Astrocyte of the cerebellum (primary cell): ENCODE measurements at regions of chr5 and their contacts with region 1.

Region 1: GRCh38 chr5:156815988-156816599 is 34.0 kb upstream of the PPP1R2B start:
- DNase-seq: peak; percentile 6
- H3K4me3 ChIP-seq: no peak overlapping the region
- CTCF ChIP-seq: peak; percentile 56

Region 2: DNA sequence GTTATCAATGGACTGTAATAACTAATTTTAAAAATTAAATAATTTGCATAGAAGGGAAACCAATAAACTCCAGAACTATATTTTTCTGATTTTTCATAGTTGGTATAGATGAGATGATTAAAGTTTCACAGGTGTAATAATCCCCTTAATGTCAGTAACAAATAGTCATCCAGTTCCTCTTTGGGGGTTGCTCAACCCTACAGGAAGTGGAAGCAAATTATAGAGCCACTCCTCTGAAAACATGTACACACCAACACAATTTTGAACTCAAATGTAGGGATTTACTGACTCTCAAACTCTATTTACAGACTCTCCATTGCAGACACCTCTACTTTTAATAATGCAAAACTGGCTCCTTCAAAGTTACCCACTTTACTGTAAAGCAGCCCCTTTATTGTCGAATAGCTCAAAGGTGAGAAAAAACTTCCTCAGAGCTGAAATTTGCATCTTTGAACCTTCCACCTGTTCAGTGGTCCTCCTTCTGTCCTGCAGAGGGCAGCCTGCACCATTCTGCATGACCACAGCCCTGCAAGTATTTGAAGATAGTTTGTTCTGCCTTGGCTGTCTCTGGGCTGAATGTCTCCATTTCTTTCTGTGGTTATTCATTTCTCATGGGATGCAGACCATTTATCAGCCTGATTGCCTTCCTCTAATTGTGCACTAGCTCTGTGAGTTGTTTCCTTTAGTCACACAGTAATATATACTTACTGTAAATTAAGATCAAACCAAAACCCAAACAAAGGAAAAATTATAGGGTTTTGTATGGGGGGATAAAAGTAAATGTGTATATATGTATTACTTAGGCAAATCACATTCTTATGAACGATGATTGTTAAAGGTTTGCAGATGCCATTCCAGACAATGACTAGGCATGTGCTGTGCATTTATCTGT is 872.3 kb before region 1 on chr5:
- in situ Hi-C with region 1: loop called (anchors 25 kb)
- DNase-seq: peak; percentile 35
- H3K4me3 ChIP-seq: no peak overlapping the region
- CTCF ChIP-seq: peak; percentile 92

Region 3: DNA sequence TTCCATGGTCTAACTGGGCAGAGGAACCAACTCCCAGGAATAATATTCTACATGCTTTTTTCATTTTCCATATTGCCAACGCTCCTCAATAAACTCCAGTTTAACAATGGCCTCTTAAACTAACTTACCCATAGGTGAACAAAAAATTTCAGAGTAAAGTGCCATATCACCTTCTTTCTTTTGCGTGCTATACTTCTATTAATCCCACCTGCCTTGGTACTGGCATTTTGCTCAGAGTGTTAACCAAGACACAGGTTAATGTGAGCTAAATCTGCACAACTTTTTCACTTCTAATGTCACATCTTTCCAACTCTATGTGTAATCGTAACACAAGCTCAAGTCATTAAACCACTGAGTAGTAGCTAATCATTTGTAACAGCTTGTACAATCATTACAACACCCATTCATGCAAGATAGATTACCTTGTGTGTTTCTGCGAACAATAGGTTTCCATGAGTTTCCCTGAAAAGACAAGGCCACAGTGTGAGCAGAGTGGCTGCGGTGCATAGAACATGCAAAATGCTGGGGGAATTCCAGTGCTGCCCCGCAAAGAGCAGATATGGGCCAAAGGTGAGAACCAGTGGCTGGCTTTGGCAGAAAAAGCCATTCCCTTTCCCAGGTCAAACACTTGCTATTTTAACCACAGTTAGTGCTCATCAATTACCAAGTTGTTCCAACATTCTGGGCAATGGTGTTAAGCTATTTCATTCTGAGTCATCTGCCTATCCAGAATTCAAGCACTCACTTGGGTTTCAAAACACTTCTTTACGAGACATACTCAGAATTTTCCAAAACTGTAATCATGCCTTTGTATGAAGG is 104.2 kb after region 1 on chr5:
- in situ Hi-C with region 1: no loop called
- DNase-seq: no peak
- H3K4me3 ChIP-seq: no peak overlapping the region
- CTCF ChIP-seq: no peak

Region 4: DNA sequence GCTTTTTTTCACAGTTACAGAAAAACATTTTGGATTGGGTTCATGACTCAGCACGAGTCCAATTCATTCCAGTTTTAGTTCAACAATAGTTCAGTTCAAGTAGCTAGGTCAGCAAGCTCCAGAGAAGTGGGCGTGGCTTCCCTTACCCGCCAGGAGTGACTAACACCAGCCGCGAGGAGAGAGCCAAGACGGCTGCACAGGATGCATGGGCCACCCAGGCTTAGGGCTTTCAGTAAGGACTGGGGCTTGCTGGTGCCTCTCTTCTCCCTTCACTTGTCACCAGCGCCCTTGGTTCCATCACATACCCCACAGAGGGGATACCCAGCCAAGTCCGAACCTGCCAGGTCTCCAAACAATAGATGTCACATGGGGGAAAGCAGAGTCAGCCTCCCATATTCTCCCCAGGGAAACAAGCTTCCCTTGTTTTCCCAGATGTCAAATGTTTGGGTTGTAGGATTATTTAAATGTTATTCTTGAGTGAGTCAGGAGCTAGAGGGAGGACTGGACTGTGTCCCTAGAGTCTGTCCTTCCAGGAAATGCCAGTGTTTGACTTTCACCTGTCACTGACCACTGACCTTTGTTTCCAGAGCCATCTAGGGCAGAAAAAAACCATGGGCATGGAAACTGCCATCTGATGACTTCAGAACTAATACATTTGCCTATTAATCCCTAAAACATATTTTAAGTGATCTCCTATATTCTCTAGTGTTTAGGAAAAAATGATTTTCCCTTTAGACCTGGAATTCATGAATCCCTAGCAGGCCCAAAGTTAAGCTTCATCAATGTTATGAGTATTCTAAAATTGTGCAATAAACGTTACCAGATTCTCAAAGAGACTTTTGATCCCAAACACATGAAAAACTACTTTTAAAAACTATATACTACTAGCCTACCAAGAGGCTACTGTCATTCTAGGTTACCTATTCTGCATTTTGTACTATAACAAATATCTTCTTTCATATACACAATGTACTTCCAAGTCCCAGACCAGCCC is 695.9 kb after region 1 on chr5:
- in situ Hi-C with region 1: no loop called
- DNase-seq: peak; percentile 98
- H3K4me3 ChIP-seq: no peak overlapping the region
- CTCF ChIP-seq: no peak